HEK293 (cell line): ENCODE measurements at regions of chr1 and their contacts with region 1.

Region 1: GRCh38 chr1:226209307-226210059 is 14.0 kb upstream of the MIXL1 start:
- H3K4me3 ChIP-seq: no peak overlapping the region
- H3K27ac ChIP-seq: no peak overlapping the region
- H3K4me1 ChIP-seq: no peaks in the 10 kb centered on the region
- CTCF ChIP-seq: no peak

Region 2: DNA sequence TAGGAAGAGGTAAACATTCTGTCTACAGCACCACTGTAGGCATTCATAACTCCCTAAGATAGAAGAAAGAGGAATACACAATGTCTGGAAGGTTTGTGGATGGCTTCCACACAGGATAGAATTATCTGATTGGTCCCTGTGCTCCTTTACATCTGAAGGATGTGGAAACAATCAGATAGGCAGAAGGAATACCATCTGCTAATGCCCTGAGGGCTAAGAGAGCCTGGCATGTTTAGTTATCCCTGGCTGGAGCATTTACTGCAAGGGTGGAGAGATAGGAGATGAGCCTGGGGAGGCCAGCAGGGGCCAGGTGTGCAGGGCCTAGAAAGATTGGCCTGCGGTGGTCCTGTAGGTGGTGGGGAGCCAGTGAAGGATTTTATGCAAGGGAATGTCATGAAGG is 14.3 kb before region 1 on chr1:
- CTCF ChIA-PET with region 1: interaction called, 13 read pairs
- POLR2A ChIA-PET with region 1: no interaction called
- H3K4me3 ChIP-seq: no peak overlapping the region
- H3K27ac ChIP-seq: no peak overlapping the region
- H3K4me1 ChIP-seq: peaks cover 5% of the 10 kb centered on the region; the same call in 1 of the 2 replicates
- CTCF ChIP-seq: no peak

Region 3: GRCh38 chr1:226233293-226233692 is 23.8 kb after region 1 on chr1:
- CTCF ChIA-PET with region 1: no interaction called
- POLR2A ChIA-PET with region 1: no interaction called
- H3K4me3 ChIP-seq: no peak overlapping the region
- H3K27ac ChIP-seq: no peak overlapping the region
- H3K4me1 ChIP-seq: no peaks in the 10 kb centered on the region
- CTCF ChIP-seq: no peak

Region 4: GRCh38 chr1:226248091-226248490 is 38.6 kb after region 1 on chr1:
- CTCF ChIA-PET with region 1: no interaction called
- POLR2A ChIA-PET with region 1: no interaction called
- H3K4me3 ChIP-seq: no peak overlapping the region
- H3K27ac ChIP-seq: no peak overlapping the region
- H3K4me1 ChIP-seq: no peaks in the 10 kb centered on the region
- CTCF ChIP-seq: no peak